ENCODE measurements at regions of chr14 and their contacts with region 1.

Region 1: DNA sequence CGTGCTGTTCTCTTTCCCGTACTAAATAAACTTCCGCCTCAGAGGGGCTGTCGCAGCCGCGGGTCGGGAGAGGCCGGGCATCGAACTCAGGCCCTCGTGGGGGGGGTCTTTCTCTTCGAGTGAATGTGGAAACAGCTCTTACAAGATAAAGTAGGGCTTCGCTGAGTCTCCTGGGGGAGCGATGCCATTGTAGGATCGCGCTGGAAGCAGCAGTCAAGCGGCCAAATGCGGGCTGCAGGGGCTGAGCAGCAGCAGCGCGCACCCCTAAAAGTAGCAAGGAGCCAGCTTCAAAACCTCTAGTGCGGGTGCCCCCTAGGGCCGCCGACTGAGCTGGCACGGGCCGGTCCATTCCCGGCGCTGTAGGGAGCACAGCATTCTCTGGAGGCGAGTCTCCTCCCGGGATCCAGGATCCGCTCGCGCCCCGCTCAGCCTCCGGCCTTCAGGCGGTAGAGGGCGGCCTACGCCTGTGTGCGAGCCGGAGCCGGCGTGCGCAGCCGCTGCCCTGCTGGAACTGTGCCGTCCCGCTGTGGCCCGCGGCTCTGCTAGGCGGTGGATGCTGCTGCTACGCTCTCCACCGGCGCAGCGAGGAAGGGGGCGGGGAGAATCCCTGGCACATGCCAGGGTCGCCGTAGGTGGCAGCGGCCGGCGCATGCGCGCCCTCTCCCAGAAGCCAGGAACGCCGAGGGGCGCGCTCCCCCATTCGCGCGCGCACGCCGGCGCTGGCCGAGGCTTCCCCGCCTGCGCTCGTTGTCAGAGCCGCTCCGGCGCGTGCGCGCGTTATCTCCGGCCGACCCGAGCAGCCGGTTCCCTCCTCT is at the start of gene FUT8:
- DNase-seq: peak; percentile 85 to 98 (median 94)
- ATAC-seq: peak; percentile 88 to 91 (median 88)
- H3K4me3 ChIP-seq: peak within 1 kb of the TSS; percentile 85 to 94
- H3K4me3 Mint-ChIP-seq: peak within 1 kb of the TSS; percentile 92 to 99 (median 99)
- H3K27ac ChIP-seq: peak within 1 kb of the TSS; percentile 75
- H3K27ac Mint-ChIP-seq: peak within 1 kb of the TSS; percentile 99 to 100
- H3K4me1 ChIP-seq: peaks cover 6 to 20% of the 10 kb centered on the region in 2 experiments
- H3K4me1 Mint-ChIP-seq: peaks cover 40 to 50% (median 41%) of the 10 kb centered on the region in 3 donors
- H3K27me3 ChIP-seq: no peaks in the 10 kb centered on the region
- H3K27me3 Mint-ChIP-seq: no peaks in the 10 kb centered on the region
- total RNA-seq, gene FUT8: 37.6 to 51.7 (median 43.9) TPM

Region 2: GRCh38 chr14:65035049-65035448 is 377.2 kb before region 1 on chr14:
- CTCF ChIA-PET with region 1: no interaction called
- POLR2A ChIA-PET with region 1: no interaction called
- DNase-seq: no peak
- ATAC-seq: no peak
- H3K4me3 ChIP-seq: no peak overlapping the region
- H3K4me3 Mint-ChIP-seq: no peak overlapping the region
- H3K27ac ChIP-seq: no peak overlapping the region
- H3K27ac Mint-ChIP-seq: no peak overlapping the region
- H3K4me1 ChIP-seq: no peaks in the 10 kb centered on the region
- H3K4me1 Mint-ChIP-seq: peaks cover 0 to 5% (median 0%) of the 10 kb centered on the region in 3 donors
- H3K27me3 ChIP-seq: no peaks in the 10 kb centered on the region
- H3K27me3 Mint-ChIP-seq: no peaks in the 10 kb centered on the region

Region 3: DNA sequence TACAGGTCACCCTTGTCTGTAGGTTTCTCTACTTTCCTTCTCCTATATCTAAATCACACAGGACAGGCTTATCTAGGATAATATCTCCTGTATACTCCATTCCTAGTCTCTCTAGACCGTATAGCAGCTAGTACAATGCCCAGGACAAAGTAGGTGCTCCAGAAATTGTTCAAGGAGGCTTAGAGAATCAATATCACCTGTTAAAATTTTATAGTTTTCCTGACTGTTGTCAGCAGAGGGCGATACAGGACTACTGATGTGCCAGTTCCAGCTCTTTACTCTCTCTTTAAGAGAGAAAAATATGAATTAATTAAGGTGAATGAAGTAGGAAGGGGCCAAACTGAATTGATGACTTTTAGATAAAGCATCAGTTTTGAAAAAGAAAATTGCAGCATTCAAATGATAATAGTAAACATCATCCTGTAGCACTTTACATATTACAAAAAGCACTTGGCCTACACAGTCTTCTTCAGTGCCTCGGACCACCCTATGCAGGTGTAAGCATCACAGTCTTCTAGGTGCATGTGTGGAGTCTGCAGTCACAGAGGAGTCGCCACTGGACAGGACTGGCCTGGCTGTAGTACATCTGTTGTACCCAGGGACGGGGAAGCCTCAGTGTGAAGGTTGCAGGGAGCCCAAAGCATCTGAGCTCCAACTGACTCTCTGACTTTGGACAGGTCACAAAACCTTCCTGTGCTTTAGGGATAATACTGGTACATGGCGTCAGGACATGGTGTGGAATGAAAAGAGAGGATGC is 248.0 kb before region 1 on chr14:
- CTCF ChIA-PET with region 1: interaction called, 7 to 13 read pairs
- POLR2A ChIA-PET with region 1: no interaction called
- DNase-seq: peak in 23 of 35 experiments; percentile 5 to 77 (median 23)
- ATAC-seq: peak; percentile 43 to 64 (median 54)
- H3K4me3 ChIP-seq: no peak overlapping the region
- H3K4me3 Mint-ChIP-seq: no peak overlapping the region
- H3K27ac ChIP-seq: no peak overlapping the region
- H3K27ac Mint-ChIP-seq: no peak overlapping the region
- H3K4me1 ChIP-seq: no peaks in the 10 kb centered on the region
- H3K4me1 Mint-ChIP-seq: peaks cover 0 to 6% (median 6%) of the 10 kb centered on the region in 3 donors
- H3K27me3 ChIP-seq: no peaks in the 10 kb centered on the region
- H3K27me3 Mint-ChIP-seq: no peaks in the 10 kb centered on the region

Region 4: GRCh38 chr14:65239143-65239937 is 172.9 kb before region 1 on chr14:
- CTCF ChIA-PET with region 1: interaction called in 1 of 2 experiments, 4 read pairs
- POLR2A ChIA-PET with region 1: interaction called in 1 of 2 experiments, 12 read pairs
- DNase-seq: no peak
- ATAC-seq: no peak
- H3K4me3 ChIP-seq: no peak overlapping the region
- H3K4me3 Mint-ChIP-seq: no peak overlapping the region
- H3K27ac ChIP-seq: no peak overlapping the region
- H3K27ac Mint-ChIP-seq: no peak overlapping the region
- H3K4me1 ChIP-seq: peaks cover 5 to 12% of the 10 kb centered on the region in 2 experiments
- H3K4me1 Mint-ChIP-seq: peaks cover 4 to 10% (median 4%) of the 10 kb centered on the region in 3 donors
- H3K27me3 ChIP-seq: peaks cover 0 to 5% of the 10 kb centered on the region in 2 experiments
- H3K27me3 Mint-ChIP-seq: no peaks in the 10 kb centered on the region

Region 5: GRCh38 chr14:65392296-65392695 is 19.9 kb before region 1 on chr14:
- CTCF ChIA-PET with region 1: no interaction called
- POLR2A ChIA-PET with region 1: no interaction called
- DNase-seq: no peak
- ATAC-seq: no peak
- H3K4me3 ChIP-seq: no peak overlapping the region
- H3K4me3 Mint-ChIP-seq: no peak overlapping the region
- H3K27ac ChIP-seq: no peak overlapping the region
- H3K27ac Mint-ChIP-seq: no peak overlapping the region
- H3K4me1 ChIP-seq: no peaks in the 10 kb centered on the region
- H3K4me1 Mint-ChIP-seq: no peaks in the 10 kb centered on the region
- H3K27me3 ChIP-seq: no peaks in the 10 kb centered on the region
- H3K27me3 Mint-ChIP-seq: no peaks in the 10 kb centered on the region

Region 6: DNA sequence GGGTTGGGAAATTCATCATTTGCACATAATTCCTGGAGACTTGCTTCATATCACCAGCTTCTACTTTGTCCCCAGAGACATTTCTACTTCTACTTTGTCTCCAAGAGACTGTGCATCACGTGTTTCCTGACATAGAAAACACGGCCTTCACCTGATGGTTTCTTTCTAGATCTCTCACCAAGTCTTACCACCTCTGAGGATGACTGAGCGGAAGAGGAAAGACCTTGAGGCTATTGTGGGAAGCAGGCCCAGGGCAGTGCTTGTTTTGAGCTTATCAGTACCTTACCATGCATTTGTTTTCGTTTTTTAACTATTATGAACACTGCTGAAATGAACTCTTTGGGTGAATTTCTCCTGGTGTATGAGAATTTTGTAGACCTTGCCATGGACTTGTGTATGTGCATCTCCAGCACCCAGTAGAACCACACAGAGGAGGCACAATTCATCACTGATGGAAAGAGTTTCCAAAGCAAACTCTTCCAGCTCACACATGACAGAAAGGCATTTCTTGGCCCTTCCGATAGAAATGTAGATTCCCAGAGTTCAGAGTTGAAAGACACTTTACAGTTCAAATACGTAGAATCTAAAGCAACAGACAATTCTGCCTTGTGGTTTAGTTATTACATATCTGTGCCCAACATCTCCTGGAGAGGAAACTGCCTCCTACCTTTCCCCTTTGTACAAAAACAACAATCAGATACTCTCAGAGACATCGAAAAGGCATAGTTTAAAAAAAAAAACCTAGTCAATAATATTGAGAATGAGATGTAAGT is 435.0 kb after region 1 on chr14:
- CTCF ChIA-PET with region 1: interaction called, 3 to 11 read pairs
- POLR2A ChIA-PET with region 1: no interaction called
- DNase-seq: peak; percentile 36 to 89 (median 73)
- ATAC-seq: peak; percentile 86 to 90 (median 87)
- H3K4me3 ChIP-seq: peak overlapping the region; percentile 13 to 40
- H3K4me3 Mint-ChIP-seq: peak overlapping the region; percentile 52 to 73 (median 66)
- H3K27ac ChIP-seq: peak overlapping the region; percentile 94
- H3K27ac Mint-ChIP-seq: peak overlapping the region; percentile 87 to 95
- H3K4me1 ChIP-seq: peaks cover 76 to 87% of the 10 kb centered on the region in 2 experiments
- H3K4me1 Mint-ChIP-seq: peaks cover 88 to 91% (median 90%) of the 10 kb centered on the region in 3 donors
- H3K27me3 ChIP-seq: no peaks in the 10 kb centered on the region
- H3K27me3 Mint-ChIP-seq: no peaks in the 10 kb centered on the region

Region 7: GRCh38 chr14:66037361-66037760 is 625.1 kb after region 1 on chr14:
- CTCF ChIA-PET with region 1: interaction called in 1 of 2 experiments, 10 read pairs
- POLR2A ChIA-PET with region 1: no interaction called
- DNase-seq: no peak
- ATAC-seq: no peak
- H3K4me3 ChIP-seq: no peak overlapping the region
- H3K4me3 Mint-ChIP-seq: no peak overlapping the region
- H3K27ac ChIP-seq: no peak overlapping the region
- H3K27ac Mint-ChIP-seq: no peak overlapping the region
- H3K4me1 ChIP-seq: no peaks in the 10 kb centered on the region
- H3K4me1 Mint-ChIP-seq: peaks cover 0 to 6% (median 0%) of the 10 kb centered on the region in 3 donors
- H3K27me3 ChIP-seq: peaks cover 0 to 7% of the 10 kb centered on the region in 2 experiments
- H3K27me3 Mint-ChIP-seq: peaks cover 12 to 20% of the 10 kb centered on the region in 2 donors

Measured in T-cell (primary cell).